WTC11 (cell line): ENCODE measurements at regions of chr1 and their contacts with region 1.

Region 1: DNA sequence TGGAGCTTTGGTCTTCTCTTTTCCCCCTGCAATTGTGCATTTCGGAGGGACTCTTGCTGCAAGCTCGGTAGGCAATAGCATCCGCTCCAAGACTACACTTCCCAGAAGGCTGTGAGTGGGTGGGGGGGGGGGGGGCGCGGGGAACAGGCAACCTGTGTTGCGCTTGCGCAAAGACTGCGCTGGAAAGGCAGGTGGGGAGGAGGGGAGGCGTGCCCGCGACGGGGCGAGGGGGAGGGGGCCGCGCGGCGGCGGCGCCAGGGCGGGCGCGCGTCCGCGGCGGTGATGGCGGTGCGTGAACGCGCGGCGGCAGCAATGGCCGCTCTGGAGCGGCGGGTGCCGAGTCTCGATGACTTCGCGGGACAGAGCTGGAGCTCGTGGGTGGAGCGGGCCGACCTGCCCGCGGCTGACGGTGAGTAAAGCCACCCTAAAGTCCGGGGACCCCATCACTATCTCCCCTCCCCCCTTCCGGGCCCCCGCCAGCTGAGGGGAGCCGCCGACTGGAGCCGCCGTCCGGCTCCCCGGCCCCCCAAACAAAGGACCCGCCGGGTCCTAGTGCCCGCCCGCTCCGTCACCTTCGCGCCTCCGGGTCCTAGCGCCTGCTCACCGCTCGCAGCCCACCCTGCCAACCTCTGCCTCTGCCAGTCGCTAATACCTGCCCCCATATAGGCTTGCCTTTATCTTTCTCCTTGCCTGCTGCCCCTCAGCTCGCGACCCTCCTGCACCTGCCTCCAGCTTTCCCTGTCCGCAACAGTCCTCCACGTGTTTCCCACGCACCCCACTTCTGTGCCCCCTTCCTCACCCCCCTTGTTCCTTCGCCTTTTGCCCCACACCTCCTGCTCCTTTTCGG is at the start of gene ATXN7L2:
- DNase-seq: peak; percentile 91
- ATAC-seq: peak; percentile 61
- H3K4me3 Mint-ChIP-seq: peak within 1 kb of the TSS; percentile 85
- H3K27ac Mint-ChIP-seq: peak within 1 kb of the TSS; percentile 89
- H3K4me1 Mint-ChIP-seq: peaks cover 30% of the 10 kb centered on the region
- H3K27me3 Mint-ChIP-seq: no peaks in the 10 kb centered on the region; the same call in none of the 2 replicates
- CTCF ChIP-seq: no peak
- total RNA-seq, gene ATXN7L2: 8.9 to 11.1 TPM (median 10.9 TPM) in 3 replicates

Region 2: DNA sequence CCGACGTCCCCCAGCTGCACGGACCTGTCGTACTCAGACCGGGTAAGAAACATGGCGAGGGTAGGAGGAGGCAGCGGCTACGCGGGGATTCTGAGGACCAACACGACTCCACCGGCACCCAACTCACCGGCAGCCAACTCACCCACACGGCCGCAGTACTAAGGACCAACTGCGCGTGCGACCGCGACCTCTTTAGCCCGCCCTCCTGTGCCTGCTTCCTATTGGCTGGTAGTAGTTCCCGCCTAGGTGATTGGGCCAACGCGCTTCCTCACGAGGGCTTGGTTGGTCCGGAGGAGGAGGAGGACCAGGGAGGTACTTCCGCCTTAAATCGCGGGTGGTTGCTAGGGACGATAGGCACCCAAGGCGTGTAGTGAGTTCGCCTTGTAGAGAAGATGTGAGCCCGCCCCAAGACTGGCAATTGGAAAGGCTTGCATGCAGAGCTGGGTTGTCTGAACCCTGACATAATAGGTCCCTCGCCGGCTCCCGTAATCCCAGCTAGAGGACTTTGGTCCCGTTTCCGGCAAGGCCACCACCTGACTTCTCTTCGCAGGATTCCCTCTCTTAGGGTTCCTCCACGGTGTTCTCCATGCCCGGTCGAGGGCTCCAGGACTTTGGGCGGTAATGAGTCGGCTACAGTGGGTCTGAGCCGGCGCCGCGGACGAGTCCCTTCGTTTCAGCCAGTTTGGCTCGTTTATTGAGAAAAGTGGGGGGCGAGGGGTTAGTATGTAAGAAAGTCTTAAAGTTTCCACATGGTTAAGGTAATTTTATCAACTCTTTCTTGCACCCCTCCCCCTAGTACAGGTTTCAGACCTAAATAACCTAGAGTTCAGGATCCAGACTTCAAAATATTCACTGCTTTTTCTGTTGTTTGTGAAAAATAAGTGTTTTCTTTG is 57.4 kb before region 1 on chr1 and contains the start of gene PSMA5:
- CTCF ChIA-PET with region 1: interaction called, 9 read pairs
- POLR2A ChIA-PET with region 1: interaction called, 15 read pairs
- DNase-seq: peak; percentile 93
- ATAC-seq: peak; percentile 98
- H3K4me3 Mint-ChIP-seq: peak within 1 kb of the TSS; percentile 88
- H3K27ac Mint-ChIP-seq: peak within 1 kb of the TSS; percentile 90
- H3K4me1 Mint-ChIP-seq: peaks cover 27% of the 10 kb centered on the region
- H3K27me3 Mint-ChIP-seq: no peaks in the 10 kb centered on the region
- CTCF ChIP-seq: no peak
- total RNA-seq, gene PSMA5: 115 to 150 TPM (median 119 TPM) in 3 replicates

Region 3: GRCh38 chr1:109468903-109469302 is 15.0 kb before region 1 on chr1:
- CTCF ChIA-PET with region 1: interaction called, 10 read pairs
- POLR2A ChIA-PET with region 1: interaction called, 3 read pairs
- DNase-seq: no peak
- ATAC-seq: no peak
- H3K4me3 Mint-ChIP-seq: no peak overlapping the region
- H3K27ac Mint-ChIP-seq: no peak overlapping the region
- H3K4me1 Mint-ChIP-seq: peaks cover 25% of the 10 kb centered on the region
- H3K27me3 Mint-ChIP-seq: peaks cover 57% of the 10 kb centered on the region
- CTCF ChIP-seq: no peak

Region 4: GRCh38 chr1:109509176-109510134 is 25.6 kb after region 1 on chr1 and contains the start of gene AMIGO1:
- CTCF ChIA-PET with region 1: interaction called, 10 read pairs
- POLR2A ChIA-PET with region 1: interaction called, 4 read pairs
- DNase-seq: peak; percentile 70
- ATAC-seq: peak; percentile 74
- H3K4me3 Mint-ChIP-seq: peak within 1 kb of the TSS; percentile 89
- H3K27ac Mint-ChIP-seq: no peak within 1 kb of the TSS
- H3K4me1 Mint-ChIP-seq: peaks cover 16% of the 10 kb centered on the region
- H3K27me3 Mint-ChIP-seq: peaks cover 54% of the 10 kb centered on the region
- CTCF ChIP-seq: no peak
- total RNA-seq, gene AMIGO1: 2.4 to 3.0 TPM (median 3.0 TPM) in 3 replicates